ENCODE measurements at regions of chr6 and their contacts with region 1.

Region 1: GRCh38 chr6:44246663-44247337 is at the start of gene HSP90AB1:
- DNase-seq: peak; percentile 78 to 99 (median 96)
- ATAC-seq: peak; percentile 76 to 80
- H3K4me3 Mint-ChIP-seq: peak within 1 kb of the TSS; percentile 90 to 100 (median 98)
- H3K27ac Mint-ChIP-seq: peak within 1 kb of the TSS; percentile 94 to 100 (median 98)
- H3K4me1 Mint-ChIP-seq: peaks cover 33 to 56% (median 49%) of the 10 kb centered on the region in 4 donors
- H3K27me3 Mint-ChIP-seq: peaks cover 0 to 3% (median 0%) of the 10 kb centered on the region in 5 donors
- polyA plus RNA-seq, gene HSP90AB1: 420 to 607 (median 518) TPM

Region 2: DNA sequence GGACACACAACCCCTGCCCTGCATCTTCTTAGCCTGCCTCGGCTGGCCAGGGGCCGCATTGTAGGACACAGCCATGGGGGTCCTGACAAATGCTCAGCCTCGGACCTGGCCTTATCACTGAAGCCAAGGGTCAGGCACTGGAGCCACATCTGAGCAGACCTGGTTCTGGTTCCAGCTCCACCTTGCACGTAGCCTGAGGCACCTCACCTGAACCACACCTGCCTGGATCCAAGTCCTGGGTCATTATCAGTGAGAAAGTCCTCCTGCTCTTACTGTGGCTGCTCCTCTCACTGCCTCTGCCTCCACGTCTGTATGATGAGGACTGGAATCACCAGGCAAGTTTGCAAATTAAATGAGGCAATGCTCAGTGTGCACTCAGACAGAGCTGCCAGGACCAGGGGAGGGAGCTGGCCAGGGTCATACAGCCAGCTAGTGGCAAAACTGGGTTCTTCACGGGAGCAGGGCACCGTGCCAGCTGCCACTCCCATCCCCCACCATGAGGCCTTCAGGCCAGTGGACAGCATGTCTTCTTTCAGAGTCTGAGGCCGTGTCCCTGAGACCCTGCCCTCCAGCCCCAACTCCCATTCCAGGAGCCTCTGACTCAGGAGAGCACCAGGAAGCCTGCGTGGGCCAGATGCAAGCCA is 159.7 kb before region 1 on chr6:
- POLR2A ChIA-PET with region 1: no interaction called
- DNase-seq: no peak
- ATAC-seq: no peak
- H3K4me3 Mint-ChIP-seq: no peak overlapping the region
- H3K27ac Mint-ChIP-seq: no peak overlapping the region
- H3K4me1 Mint-ChIP-seq: no peaks in the 10 kb centered on the region
- H3K27me3 Mint-ChIP-seq: no peaks in the 10 kb centered on the region

Region 3: DNA sequence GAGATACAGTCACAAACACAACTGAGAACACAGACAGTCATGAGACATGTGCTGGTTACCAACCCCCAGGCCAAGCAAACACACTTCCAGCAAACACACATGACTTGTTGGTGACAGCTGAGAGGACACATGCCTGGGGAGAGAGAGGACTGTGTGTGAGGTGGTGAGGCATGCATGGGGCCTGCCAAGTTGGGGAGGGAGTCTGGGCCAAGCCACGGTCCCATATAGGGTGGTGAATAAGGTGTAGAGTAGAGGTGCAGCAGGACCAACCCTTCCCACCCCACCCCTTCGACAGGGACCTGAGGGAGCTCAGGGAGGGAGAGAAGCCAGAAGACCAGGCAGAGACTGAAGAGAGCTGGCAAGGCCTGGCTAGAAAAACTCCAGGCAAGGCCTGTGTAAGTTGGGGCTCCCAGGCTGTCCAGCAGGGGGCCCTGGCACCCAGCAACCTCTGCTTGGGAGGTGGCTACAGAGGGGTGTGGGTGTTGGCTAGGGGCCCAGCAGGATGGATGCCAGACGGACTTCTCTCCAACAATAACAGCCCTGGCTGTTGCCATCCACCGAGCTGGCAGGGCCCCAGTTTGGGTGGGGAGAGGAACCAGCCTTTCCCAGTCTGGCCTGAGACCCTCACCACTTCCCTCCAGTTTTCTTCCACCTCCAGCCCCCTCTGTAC is 25.4 kb before region 1 on chr6:
- POLR2A ChIA-PET with region 1: interaction called, 47 read pairs
- DNase-seq: peak; percentile 52 to 85 (median 66)
- ATAC-seq: peak; percentile 47 to 69
- H3K4me3 Mint-ChIP-seq: peak overlapping the region in 8 of 10 donors; percentile 26 to 67 (median 42)
- H3K27ac Mint-ChIP-seq: peak overlapping the region in 3 of 10 donors; percentile 29 to 65 (median 44)
- H3K4me1 Mint-ChIP-seq: peaks cover 14 to 40% (median 36%) of the 10 kb centered on the region in 4 donors
- H3K27me3 Mint-ChIP-seq: peaks cover 0 to 4% (median 0%) of the 10 kb centered on the region in 5 donors

Region 4: DNA sequence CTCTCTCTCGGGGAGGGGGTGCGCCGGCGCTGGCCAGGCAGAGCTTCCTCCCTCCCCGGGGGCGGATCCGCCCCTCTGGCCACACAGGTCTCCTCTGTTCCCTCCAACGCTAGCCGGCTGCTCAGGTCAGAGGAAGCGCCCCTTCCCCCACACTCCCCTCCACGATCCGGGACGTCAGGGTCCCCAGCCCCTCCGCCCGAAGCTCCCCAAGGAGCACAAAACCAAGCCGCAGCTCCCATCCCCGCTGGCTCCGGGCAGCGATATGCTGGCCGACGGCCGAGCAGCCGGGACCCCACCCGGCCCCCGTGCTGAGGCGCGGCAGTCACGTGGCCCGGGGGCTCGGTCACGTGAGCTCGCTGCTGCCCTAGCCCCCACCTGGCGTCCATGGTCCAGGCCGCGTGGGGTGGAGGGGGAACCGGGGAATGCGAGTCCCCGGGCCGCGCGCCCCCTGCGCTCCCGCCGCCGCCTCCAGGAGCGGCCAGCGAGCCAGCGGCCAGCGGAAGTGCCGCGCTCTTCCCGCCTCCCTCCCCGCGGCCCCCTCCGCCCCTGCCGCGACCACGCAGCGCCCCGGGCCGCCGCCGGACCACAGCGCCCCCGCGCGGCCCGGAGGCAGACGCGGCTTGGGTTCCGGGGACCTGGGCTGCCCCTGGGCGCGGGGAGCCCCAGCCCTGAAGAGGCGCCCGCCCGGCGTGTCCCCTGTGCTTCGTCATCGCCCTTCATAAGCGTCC is 10.4 kb after region 1 on chr6 and contains the start of gene SLC35B2:
- POLR2A ChIA-PET with region 1: interaction called, 156 read pairs
- DNase-seq: peak; percentile 40 to 79 (median 70)
- ATAC-seq: peak; percentile 72 to 84
- H3K4me3 Mint-ChIP-seq: peak within 1 kb of the TSS; percentile 78 to 97 (median 90)
- H3K27ac Mint-ChIP-seq: peak within 1 kb of the TSS; percentile 91 to 97 (median 94)
- H3K4me1 Mint-ChIP-seq: peaks cover 35 to 83% (median 61%) of the 10 kb centered on the region in 4 donors
- H3K27me3 Mint-ChIP-seq: no peaks in the 10 kb centered on the region
- polyA plus RNA-seq, gene SLC35B2: 31.9 to 40.1 (median 39.0) TPM

Region 5: DNA sequence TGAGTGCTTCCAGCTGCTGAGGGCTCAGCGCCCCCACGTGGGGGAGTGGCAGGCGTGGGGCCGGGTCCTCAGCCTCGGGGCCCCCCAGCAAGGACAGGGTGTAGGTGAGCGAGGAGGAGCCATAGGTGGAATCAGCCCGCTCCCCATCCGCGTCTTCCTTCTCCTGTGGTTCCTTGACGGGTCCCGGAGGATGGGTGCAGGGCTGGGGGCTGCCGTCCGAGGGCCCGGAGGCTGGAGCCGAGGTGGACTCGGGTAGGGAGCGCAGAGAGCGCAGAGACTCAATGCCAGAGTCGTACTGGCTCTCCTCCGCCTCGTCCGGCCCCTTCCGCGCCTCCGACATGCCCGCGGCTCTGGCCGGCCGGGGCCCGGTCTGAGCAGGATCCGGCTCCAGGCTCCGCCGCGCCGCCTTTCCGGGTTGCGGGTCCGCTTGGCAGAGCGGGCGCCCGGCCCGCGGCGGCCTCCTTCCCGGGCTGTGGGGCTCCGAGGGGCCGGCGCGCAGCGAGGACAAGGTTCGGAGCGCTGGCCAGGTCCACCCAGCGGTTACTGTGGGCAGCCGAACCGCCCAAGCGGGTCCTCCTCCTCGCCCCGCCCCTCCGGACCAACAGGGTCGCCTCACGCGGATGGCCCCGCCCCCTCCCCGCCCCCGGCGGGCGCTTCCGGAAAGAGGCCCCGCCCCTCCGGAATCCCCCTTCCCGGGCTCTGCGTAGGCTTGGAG is 18.4 kb after region 1 on chr6 and contains the start of gene NFKBIE:
- POLR2A ChIA-PET with region 1: interaction called, 54 read pairs
- DNase-seq: peak; percentile 86 to 98 (median 95)
- ATAC-seq: peak; percentile 71 to 79
- H3K4me3 Mint-ChIP-seq: peak within 1 kb of the TSS; percentile 84 to 98 (median 96)
- H3K27ac Mint-ChIP-seq: peak within 1 kb of the TSS; percentile 89 to 97 (median 95)
- H3K4me1 Mint-ChIP-seq: peaks cover 27 to 67% (median 58%) of the 10 kb centered on the region in 4 donors
- H3K27me3 Mint-ChIP-seq: peaks cover 0 to 11% (median 3%) of the 10 kb centered on the region in 5 donors
- polyA plus RNA-seq, gene NFKBIE: 2.7 to 4.1 (median 3.6) TPM

Measured in naive thymus-derived CD8-positive, alpha-beta T cell (primary cell).